GM10248 (cell line): ENCODE measurements at regions of chr10 and their contacts with region 1.

Region 1: GRCh38 chr10:46530249-46531186 is 25.9 kb downstream of the GPRIN2 start:
- DNase-seq: no peak
- CTCF ChIP-seq: no peak

Region 2: DNA sequence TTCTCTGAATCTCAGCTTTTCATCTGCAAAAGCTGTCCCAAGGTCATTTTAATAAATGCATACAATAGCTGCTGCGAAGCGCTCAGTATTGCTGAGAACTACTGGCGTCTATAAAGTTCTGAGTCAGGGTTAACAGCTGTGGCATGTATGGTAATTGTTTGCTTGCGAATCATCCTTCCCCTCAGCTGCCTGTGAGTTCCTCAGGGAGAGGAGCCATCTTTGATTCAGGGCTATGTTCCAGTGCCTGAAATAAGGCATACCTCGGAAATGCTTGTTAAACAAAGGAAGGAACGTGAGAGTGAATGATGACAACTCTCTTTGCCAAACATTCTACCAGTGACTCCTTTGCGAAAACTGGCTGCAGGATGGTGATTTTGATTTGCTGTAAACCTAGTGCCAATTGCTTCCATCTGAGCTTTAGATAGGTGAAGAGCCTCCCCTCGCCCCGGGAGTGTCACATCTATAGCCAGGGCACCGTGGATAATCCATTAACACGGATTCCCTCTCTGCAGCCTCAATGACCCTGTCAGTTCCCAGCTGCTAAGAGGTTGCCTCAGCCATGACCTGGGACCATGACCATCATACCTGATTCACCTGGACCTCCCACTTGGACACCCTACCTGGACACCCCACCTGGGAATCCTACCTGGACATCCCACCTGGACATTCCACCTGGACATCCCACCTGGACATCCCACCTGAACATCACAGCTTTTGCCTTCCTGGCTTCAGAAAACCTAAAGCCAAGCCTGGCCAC is 13.7 kb before region 1 on chr10:
- CTCF ChIA-PET with region 1: interaction called, 10 read pairs
- POLR2A ChIA-PET with region 1: no interaction called
- DNase-seq: no peak
- CTCF ChIP-seq: no peak

Region 3: DNA sequence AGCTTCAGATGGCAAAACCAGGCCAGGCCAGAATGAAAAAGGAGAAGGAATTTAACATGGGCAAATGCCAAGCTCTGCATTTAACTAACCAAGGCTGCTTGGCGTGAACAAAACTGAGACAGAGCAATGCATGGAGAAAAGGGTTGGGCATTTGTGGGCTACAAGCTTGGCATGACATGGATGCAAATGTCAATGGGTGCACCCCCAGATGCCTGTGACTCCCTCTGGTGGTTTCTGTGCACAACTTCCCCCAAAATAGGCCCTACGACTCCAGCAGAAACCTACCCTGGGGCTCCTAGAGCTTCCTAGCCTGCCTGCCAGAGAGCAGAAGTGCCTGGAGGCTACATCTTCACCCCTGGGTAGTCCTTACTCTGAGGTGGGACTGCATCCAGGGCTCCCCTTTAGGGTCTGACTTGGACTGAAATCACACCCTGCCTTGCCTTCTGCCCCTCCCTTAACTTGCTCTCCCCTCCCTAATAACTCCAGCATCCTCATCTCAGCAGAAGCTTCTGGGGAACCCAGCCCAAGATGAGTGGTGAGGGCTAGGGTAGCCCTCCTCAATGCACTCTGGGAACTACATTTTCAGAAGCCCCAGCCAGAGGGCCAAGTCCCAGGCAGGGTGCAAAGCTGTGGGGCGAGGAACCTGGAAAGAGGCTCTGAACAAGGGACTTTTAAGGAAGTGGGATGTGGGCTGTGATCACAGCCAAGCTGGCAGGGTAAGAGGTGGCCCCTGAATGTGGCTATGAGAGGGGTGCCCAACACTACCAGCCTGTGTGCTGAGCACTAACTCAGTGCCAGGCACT is 14.7 kb after region 1 on chr10:
- CTCF ChIA-PET with region 1: interaction called, 14 read pairs
- POLR2A ChIA-PET with region 1: no interaction called
- DNase-seq: no peak
- CTCF ChIP-seq: no peak

Region 4: DNA sequence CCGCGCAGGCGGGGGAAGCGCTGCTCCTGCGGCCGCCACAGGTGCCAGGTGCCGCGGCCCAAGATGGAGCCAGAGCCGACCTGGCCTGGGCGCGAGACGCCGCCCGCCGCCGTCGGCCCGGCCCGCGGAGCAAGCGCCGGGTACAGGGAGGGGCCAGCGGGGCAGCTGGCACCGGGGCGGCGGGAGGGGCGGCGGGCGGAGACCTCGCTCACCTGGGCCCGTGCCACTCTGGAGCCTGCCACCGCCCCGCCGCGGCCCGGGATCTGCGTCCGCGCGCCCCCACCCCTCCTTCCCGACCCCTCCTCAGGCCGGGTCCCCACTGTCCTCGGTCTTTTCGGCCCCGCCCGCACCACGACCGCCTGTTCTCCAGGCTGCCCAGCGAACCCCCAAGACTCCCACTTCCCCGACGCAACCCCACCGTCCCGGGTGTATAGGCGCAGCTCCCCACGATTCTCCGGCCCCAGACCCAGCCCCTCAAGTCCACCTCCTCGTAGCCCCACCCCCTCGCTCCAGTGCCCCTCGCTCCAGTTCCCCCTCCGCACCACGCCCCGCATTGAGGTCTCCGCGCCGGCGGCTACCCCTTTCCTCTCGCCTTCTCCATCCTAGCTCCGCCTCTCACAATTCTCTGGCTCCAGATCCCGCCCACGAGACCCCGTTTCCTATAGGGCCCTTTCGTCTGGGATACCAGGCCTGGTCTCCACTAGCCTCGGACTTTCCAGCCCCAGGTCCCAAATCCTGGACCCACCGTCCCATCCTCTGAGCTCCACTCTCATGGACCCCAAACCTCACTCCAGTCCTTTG is 26.2 kb after region 1 on chr10 and contains the start of gene GPRIN2:
- CTCF ChIA-PET with region 1: no interaction called
- POLR2A ChIA-PET with region 1: no interaction called
- DNase-seq: no peak
- CTCF ChIP-seq: no peak